ENCODE measurements at regions of chr4 and their contacts with region 1.

Region 1: GRCh38 chr4:169024762-169025161 is 14.7 kb upstream of the CBR4 start:
- DNase-seq: no peak
- ATAC-seq: peak; percentile 44 to 85 (median 70)
- H3K4me3 ChIP-seq: no peak overlapping the region
- H3K27ac ChIP-seq: no peak overlapping the region
- H3K4me1 ChIP-seq: no peaks in the 10 kb centered on the region
- H3K27me3 ChIP-seq: no peaks in the 10 kb centered on the region
- CTCF ChIP-seq: peak; percentile 56

Region 2: GRCh38 chr4:169133932-169134331 is 109.2 kb after region 1 on chr4:
- intact Hi-C with region 1: loop called in 1 of 2 experiments (anchors 10 kb)
- DNase-seq: no peak
- ATAC-seq: no peak
- H3K4me3 ChIP-seq: no peak overlapping the region
- H3K27ac ChIP-seq: no peak overlapping the region
- H3K4me1 ChIP-seq: peaks cover 22% of the 10 kb centered on the region
- H3K27me3 ChIP-seq: no peaks in the 10 kb centered on the region
- CTCF ChIP-seq: no peak

Region 3: DNA sequence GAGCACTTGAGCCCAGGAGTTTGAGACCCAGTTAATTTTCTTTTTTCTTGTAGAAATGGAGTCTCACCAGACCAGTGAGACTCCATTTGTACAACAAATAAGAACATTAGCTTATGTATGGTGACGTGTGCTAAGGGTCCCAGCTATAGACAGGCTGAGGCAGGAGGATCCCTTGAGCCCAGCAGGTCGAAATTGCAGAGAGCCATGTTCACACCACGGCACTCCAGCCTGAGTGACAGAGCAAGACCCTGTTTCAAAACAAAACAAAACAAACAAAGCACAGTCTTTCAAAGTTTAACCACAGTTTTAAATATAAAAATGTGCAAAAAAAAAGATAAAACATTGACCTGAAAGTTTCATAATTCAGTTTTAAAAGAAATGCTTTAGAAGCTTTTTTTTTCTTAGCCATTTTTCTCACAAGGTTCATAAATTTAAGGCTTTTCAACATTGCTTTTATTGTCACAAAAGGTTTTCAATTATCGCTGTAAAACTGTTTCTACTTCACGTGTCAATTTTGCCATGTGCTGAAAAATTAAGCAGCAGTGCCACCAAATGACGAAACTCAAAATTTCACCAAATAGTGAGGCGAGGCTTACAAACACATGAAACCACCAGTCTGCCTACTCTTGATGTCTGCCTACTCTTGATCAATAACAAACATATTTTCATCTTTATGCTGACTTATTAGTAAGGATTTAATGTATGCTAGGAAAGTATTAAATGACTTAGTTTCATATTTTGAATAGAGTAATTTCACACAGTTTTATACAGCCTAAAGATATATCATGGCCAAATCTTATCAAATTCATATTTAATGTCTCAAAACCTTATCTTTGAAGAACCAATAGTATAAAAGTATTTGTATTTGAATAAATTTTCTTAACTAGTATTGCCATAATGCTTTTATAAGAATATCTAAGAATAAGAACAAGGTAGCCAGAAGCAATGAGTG is 461.3 kb after region 1 on chr4:
- intact Hi-C with region 1: loop called in 1 of 2 experiments (anchors 2 kb)
- DNase-seq: no peak
- ATAC-seq: peak in 2 of 4 donors; percentile 49 to 85
- H3K4me3 ChIP-seq: no peak overlapping the region
- H3K27ac ChIP-seq: no peak overlapping the region
- H3K4me1 ChIP-seq: no peaks in the 10 kb centered on the region
- H3K27me3 ChIP-seq: no peaks in the 10 kb centered on the region
- CTCF ChIP-seq: peak; percentile 61

Measured in psoas muscle (tissue), 8 donors.